Activated T-helper 1 cell treated with anti-CD3 and anti-CD28 coated beads, Interleukin-12 subunit alpha, Interleukin-12 subunit beta, Interleukin-2, Interleukin-4 antibody, amounts not matched to agents 30 ng/mL and 10 ng/mL and 1 ng/mL, durations not matched to agents 14 hours and 24 hours and 36 hours (primary cell): ENCODE measurements at regions of chr1 and their contacts with region 1.

Region 1: GRCh38 chr1:235883261-235883927 is 16.7 kb upstream of the LYST start:
- DNase-seq: no peak
- H3K4me3 Mint-ChIP-seq: peak overlapping the region; percentile 81
- H3K27ac Mint-ChIP-seq: peak overlapping the region; percentile 89
- H3K4me1 Mint-ChIP-seq: peaks cover 78% of the 10 kb centered on the region
- H3K27me3 Mint-ChIP-seq: no peaks in the 10 kb centered on the region

Region 2: GRCh38 chr1:234610348-234611152 is 1272.8 kb before region 1 on chr1:
- intact Hi-C with region 1: no loop called
- DNase-seq: peak; percentile 90
- H3K4me3 Mint-ChIP-seq: peak overlapping the region; percentile 92
- H3K27ac Mint-ChIP-seq: peak overlapping the region; percentile 99
- H3K4me1 Mint-ChIP-seq: peaks cover 49% of the 10 kb centered on the region
- H3K27me3 Mint-ChIP-seq: no peaks in the 10 kb centered on the region

Region 3: GRCh38 chr1:235802947-235803346 is 80.4 kb before region 1 on chr1:
- intact Hi-C with region 1: loop called (anchors 1 kb)
- DNase-seq: no peak
- H3K4me3 Mint-ChIP-seq: no peak overlapping the region
- H3K27ac Mint-ChIP-seq: no peak overlapping the region
- H3K4me1 Mint-ChIP-seq: peaks cover 6% of the 10 kb centered on the region
- H3K27me3 Mint-ChIP-seq: no peaks in the 10 kb centered on the region

Region 4: GRCh38 chr1:235866913-235867845 is 16.2 kb before region 1 on chr1:
- intact Hi-C with region 1: loop called (anchors 1 kb)
- DNase-seq: peak; percentile 99
- H3K4me3 Mint-ChIP-seq: peak overlapping the region; percentile 98
- H3K27ac Mint-ChIP-seq: peak overlapping the region; percentile 98
- H3K4me1 Mint-ChIP-seq: peaks cover 57% of the 10 kb centered on the region
- H3K27me3 Mint-ChIP-seq: no peaks in the 10 kb centered on the region

Region 5: GRCh38 chr1:235917267-235917811 is 33.9 kb after region 1 on chr1:
- intact Hi-C with region 1: loop called (anchors 1 kb)
- DNase-seq: peak; percentile 29
- H3K4me3 Mint-ChIP-seq: no peak overlapping the region
- H3K27ac Mint-ChIP-seq: peak overlapping the region; percentile 90
- H3K4me1 Mint-ChIP-seq: peaks cover 29% of the 10 kb centered on the region
- H3K27me3 Mint-ChIP-seq: no peaks in the 10 kb centered on the region

Region 6: GRCh38 chr1:235952950-235953615 is 69.7 kb after region 1 on chr1:
- intact Hi-C with region 1: loop called (anchors 1 kb)
- DNase-seq: peak; percentile 36
- H3K4me3 Mint-ChIP-seq: peak overlapping the region; percentile 19
- H3K27ac Mint-ChIP-seq: peak overlapping the region; percentile 40
- H3K4me1 Mint-ChIP-seq: peaks cover 34% of the 10 kb centered on the region
- H3K27me3 Mint-ChIP-seq: peaks cover 30% of the 10 kb centered on the region

Region 7: DNA sequence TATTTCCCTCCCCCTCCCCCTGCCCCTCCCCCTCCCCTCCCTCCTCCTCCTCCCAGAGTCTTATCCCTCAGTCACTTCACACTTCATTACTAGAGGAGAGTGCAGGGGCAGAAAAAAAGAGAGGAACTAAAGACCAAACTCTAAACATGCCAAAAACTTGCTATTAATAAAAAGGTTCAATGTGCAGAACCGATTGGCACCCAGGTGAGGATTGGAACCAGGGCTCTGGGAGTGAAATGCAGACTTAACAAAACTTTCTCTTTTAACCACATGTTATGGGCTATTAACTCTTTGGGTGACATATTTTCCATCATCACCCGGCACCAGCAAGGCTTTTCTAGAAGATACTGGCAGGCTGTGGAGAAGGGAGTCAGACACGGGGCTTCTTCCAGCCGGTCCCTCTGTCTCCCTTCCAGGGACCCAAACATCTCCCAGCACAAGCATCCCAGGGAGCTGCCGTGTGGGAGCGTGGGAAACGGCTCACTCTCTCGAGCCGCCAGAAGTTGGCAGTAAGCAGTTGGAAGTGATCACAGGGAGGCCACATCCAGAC is 167.9 kb after region 1 on chr1:
- intact Hi-C with region 1: no loop called
- DNase-seq: no peak
- H3K4me3 Mint-ChIP-seq: no peak overlapping the region
- H3K27ac Mint-ChIP-seq: no peak overlapping the region
- H3K4me1 Mint-ChIP-seq: no peaks in the 10 kb centered on the region
- H3K27me3 Mint-ChIP-seq: peaks cover 27% of the 10 kb centered on the region

Region 8: GRCh38 chr1:236095705-236096520 is 212.5 kb after region 1 on chr1:
- intact Hi-C with region 1: loop called (anchors 2 kb)
- DNase-seq: no peak
- H3K4me3 Mint-ChIP-seq: no peak overlapping the region
- H3K27ac Mint-ChIP-seq: no peak overlapping the region
- H3K4me1 Mint-ChIP-seq: no peaks in the 10 kb centered on the region
- H3K27me3 Mint-ChIP-seq: peaks cover 7% of the 10 kb centered on the region